ENCODE measurements at regions of chr5 and their contacts with region 1.

Region 1: DNA sequence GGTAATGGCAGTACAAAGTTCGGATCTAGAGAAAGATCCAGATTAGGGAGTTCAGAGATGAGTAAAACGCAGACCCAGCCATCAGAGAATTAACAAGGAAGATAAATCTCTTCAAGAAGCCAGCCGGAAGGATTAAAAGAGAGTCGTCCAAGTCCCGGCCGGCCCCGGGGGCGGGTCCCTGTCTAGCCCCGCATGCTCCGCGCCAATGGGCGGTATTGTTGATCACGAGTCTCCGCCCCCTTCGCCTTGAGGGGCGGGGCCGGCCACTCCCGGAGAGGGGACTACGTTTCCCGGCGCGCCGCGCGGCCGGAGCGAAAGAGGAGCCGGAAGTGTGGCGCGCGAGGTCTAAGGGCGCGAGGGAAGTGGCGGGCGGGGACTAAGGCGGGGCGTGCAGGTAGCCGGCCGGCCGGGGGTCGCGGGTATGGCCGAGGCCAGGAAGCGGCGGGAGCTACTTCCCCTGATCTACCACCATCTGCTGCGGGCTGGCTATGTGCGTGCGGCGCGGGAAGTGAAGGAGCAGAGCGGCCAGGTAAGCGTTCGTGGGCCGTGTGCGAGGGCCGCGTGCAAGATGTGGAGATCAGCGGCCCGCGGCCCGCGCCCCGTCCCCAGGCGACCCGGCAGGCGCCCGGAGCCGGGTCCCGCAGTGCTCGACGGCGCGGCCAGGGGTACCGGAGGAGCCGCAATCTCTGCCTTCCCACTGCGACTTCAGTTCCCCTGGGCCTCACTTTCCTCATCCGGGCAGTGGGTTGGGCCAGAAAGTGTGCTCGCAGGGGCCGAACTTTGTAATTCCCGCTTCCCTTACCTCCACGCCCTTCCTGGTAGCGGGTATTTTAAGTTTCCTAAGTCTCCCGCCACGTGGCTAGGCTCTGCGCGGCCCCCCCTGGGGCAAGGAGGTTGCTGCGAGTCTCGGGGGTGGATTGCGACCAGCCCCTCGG is at the start of gene TCOF1:
- DNase-seq: peak; percentile 96
- H3K4me3 ChIP-seq: peak within 1 kb of the TSS; percentile 83 to 88 (median 85)
- H3K27ac ChIP-seq: peak within 1 kb of the TSS; percentile 83
- H3K4me1 ChIP-seq: peaks cover 9% of the 10 kb centered on the region
- H3K27me3 ChIP-seq: no peaks in the 10 kb centered on the region
- CTCF ChIP-seq: no peak
- total RNA-seq, gene TCOF1: 17.7 to 70.4 TPM

Region 2: DNA sequence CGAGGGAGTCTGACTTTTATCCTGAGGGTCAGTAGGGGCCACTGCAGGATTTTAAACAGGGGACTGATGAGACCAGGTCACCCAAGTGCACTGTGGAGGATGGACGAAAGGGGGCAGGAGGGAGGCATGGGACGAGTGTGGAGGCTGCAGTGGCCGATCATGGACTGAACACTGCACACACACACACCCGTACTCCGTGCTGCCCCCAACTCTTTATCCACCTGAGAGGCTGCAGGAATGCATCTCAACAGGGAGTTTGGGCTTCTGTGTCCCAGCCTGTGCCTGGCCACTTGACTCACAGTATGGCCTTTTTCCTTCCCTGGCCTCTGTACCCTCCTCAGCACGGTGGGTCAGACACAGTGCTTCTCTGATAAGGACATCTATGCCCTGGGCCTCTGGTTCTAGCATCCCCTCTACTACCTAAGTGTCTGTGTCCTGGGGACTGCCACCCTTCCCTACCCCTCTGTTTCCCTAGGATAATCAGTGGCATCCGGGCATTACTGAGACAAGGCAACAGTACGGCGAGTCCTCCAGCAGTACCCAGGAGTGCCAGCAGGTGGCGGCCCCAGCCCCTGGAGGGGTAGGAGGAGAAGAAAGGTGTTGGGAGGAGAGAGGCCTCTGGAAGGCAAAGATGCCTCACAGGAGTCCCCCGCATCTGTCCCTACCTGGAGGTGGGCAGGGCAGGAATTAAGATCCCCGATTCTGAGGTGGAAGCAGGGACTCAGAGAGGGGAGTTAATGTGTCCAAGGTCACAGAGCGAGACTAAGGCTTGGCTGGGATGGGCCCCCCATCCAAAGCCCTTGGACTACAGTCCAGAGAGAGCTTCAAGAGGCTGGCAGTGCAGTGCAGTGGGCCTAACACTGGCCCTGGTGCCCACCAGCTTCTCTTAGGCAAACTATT is 196.1 kb before region 1 on chr5:
- CTCF ChIA-PET with region 1: no interaction called
- dilution Hi-C with region 1: no loop called
- in situ Hi-C with region 1: loop called in 1 of 2 experiments (anchors 25 kb)
- intact Hi-C with region 1: no loop called
- DNase-seq: peak; percentile 55
- H3K4me3 ChIP-seq: no peak overlapping the region
- H3K27ac ChIP-seq: no peak overlapping the region
- H3K4me1 ChIP-seq: no peaks in the 10 kb centered on the region
- H3K27me3 ChIP-seq: no peaks in the 10 kb centered on the region
- CTCF ChIP-seq: peak; percentile 96 to 98

Region 3: DNA sequence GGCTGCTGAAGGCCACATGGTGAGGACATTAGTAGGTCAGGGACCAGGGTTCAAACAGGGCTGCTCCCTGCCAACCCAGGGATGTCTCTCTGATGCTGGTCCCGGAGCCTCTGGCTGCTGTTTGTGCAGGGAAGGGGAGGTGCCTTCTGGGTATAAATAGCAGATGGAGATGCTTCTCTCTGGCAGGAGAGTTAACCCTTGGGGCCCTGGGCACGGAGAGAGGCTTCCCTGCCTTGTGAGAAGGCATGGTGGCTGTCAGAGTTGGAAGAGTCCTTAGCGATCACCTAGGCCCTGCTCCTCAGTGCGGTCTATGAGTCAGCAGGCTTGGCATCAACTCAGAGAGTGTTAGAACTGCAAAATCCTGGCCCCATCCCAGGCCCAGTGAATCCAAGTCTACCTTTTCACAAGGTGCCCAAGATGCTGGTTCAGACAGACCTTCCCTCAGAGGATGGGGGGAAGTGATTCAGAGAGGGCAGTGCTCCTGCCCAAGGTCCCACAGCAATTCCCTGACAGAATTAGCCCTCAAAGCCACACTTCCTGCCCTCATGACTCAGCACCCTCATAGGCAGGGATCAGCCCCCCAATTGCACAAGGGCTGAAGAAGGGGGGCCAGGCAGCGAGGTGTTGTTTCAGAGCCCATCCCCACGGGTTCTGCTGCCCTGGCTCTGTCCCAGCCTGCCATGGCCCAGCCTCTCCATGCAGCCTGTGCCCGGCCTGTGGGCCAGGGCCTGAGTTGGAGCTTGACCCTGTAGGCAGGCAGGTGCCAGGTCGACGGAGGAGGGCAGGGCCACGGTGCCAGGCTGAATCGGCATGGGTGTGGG is 93.6 kb before region 1 on chr5:
- CTCF ChIA-PET with region 1: no interaction called
- dilution Hi-C with region 1: no loop called
- in situ Hi-C with region 1: loop called in 1 of 2 experiments (anchors 10 kb)
- intact Hi-C with region 1: no loop called
- DNase-seq: peak; percentile 98
- H3K4me3 ChIP-seq: no peak overlapping the region
- H3K27ac ChIP-seq: no peak overlapping the region
- H3K4me1 ChIP-seq: peaks cover 30% of the 10 kb centered on the region
- H3K27me3 ChIP-seq: no peaks in the 10 kb centered on the region
- CTCF ChIP-seq: no peak

Region 4: DNA sequence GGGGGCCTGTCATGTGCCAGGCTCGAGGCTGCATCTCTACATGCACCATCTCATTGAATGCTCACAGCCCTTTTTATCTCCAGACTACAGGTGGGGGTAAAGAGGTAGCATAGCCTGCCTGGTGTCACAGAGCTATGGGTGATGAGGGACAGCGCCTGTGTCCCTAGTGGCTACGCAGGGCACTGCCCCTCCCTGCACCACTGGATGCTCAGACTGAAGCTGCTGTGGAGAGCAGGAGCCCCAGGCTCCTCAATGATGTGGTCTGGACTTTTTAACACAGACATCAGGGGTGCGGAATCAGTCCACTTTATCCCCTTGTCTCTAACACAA is 70.7 kb before region 1 on chr5:
- CTCF ChIA-PET with region 1: no interaction called
- dilution Hi-C with region 1: no loop called
- in situ Hi-C with region 1: no loop called
- intact Hi-C with region 1: no loop called
- DNase-seq: no peak
- H3K4me3 ChIP-seq: no peak overlapping the region
- H3K27ac ChIP-seq: no peak overlapping the region
- H3K4me1 ChIP-seq: peaks cover 15% of the 10 kb centered on the region
- H3K27me3 ChIP-seq: no peaks in the 10 kb centered on the region
- CTCF ChIP-seq: peak; percentile 26 to 34

Region 5: GRCh38 chr5:150469718-150470469 is 112.3 kb after region 1 on chr5:
- CTCF ChIA-PET with region 1: no interaction called
- dilution Hi-C with region 1: no loop called
- in situ Hi-C with region 1: no loop called
- intact Hi-C with region 1: no loop called
- DNase-seq: peak; percentile 80
- H3K4me3 ChIP-seq: no peak overlapping the region
- H3K27ac ChIP-seq: no peak overlapping the region
- H3K4me1 ChIP-seq: peaks cover 38% of the 10 kb centered on the region
- H3K27me3 ChIP-seq: no peaks in the 10 kb centered on the region
- CTCF ChIP-seq: no peak